ENCODE measurements at regions of chr16 and their contacts with region 1.

Region 1: GRCh38 chr16:85369741-85370528 is 243.2 kb upstream of the GSE1 start:
- DNase-seq: peak; percentile 84
- H3K4me3 ChIP-seq: no peak overlapping the region
- H3K27ac ChIP-seq: peak overlapping the region; percentile 50 to 95; a peak in 3 of 4 replicates
- H3K4me1 ChIP-seq: peaks cover 25 to 90% of the 10 kb centered on the region in 2 experiments
- H3K27me3 ChIP-seq: no peaks in the 10 kb centered on the region
- CTCF ChIP-seq: peak; percentile 87
- EP300 ChIP-seq: no peak
- RAD21 ChIP-seq: peak; percentile 71

Region 2: DNA sequence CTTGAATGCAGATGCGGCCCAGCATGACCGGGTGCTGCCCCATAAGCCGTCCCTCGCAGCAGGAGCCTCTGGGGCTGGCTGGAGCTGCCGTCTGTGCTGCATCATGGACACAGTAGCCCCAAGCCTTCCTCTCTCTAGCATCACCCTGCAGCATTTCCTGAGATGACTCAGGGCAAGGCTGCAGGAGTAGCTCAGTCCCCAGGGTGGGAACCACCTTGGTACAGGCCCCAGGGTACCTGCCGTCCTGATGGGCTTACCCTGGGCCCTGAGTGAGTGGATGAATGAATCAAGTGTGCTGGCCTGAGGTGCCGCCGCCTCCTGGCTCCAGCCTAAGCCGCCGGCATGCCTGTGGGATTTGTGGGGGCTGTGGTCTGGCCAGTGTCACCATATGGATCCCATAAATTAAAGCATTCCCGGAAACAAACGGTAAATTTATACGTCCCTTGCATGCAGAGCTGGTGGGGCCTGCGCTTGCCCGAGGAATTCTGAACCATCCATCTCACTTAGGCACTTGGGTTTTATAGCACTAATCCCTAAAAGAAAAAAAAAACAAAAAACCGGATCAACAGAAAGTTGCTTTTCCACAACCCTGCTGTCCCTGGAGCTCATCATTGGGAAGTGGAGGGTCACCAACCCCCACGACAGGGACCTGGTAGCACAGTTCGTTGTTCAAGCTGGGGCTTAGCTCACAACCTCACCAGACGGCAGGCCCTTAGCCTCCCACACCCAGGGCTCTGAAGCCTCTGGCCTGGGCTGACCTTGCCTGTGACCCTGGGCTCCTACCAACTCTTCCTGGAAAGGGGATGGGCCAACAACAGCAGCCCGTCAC is 15.0 kb before region 1 on chr16:
- CTCF ChIA-PET with region 1: interaction called, 37 read pairs
- POLR2A ChIA-PET with region 1: interaction called, 12 read pairs
- DNase-seq: peak; percentile 79
- H3K4me3 ChIP-seq: no peak overlapping the region
- H3K27ac ChIP-seq: peak overlapping the region; percentile 47 to 77
- H3K4me1 ChIP-seq: peaks cover 25 to 94% of the 10 kb centered on the region in 2 experiments; a peak in 3 of 4 replicates
- H3K27me3 ChIP-seq: no peaks in the 10 kb centered on the region
- CTCF ChIP-seq: no peak
- EP300 ChIP-seq: peak; percentile 75 to 88
- RAD21 ChIP-seq: peak; percentile 29

Region 3: DNA sequence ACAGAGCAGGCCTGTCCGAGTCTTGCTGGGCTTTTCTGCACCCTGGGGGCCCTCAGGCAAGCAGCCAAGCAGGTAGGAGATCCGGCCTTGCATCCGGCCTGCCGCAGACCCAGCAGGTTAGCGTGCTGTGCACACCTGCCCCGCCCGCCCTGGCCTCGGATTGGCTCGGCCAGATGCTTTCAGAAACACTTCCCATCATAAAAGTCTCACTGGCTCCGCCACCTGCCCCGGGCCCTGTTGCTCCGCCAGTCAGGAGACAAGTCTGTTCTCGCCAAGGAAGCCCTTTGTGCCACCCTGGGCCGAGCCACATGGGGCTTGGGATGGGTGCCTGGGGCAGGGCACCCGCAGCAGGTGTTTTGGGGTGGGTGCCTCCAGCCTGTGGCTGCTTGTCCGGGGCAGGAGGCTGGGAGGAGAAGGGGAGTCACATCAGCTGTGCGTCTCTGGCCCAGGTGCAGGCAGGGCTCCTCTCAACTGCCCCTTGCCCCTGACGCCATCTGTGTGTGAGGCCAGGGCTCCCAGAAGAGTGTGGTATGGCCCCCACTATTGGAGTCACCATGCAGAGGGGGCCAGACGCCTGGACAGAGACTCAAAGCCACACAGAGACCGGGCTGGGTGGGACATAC is 15.0 kb after region 1 on chr16:
- CTCF ChIA-PET with region 1: interaction called, 144 read pairs
- POLR2A ChIA-PET with region 1: interaction called, 7 read pairs
- DNase-seq: no peak
- H3K4me3 ChIP-seq: no peak overlapping the region
- H3K27ac ChIP-seq: peak overlapping the region in 1 of 2 experiments; percentile 99; a peak in 2 of 4 replicates
- H3K4me1 ChIP-seq: peaks cover 9 to 68% of the 10 kb centered on the region in 2 experiments; a peak in 3 of 4 replicates
- H3K27me3 ChIP-seq: no peaks in the 10 kb centered on the region
- CTCF ChIP-seq: no peak
- EP300 ChIP-seq: no peak
- RAD21 ChIP-seq: no peak

Region 4: DNA sequence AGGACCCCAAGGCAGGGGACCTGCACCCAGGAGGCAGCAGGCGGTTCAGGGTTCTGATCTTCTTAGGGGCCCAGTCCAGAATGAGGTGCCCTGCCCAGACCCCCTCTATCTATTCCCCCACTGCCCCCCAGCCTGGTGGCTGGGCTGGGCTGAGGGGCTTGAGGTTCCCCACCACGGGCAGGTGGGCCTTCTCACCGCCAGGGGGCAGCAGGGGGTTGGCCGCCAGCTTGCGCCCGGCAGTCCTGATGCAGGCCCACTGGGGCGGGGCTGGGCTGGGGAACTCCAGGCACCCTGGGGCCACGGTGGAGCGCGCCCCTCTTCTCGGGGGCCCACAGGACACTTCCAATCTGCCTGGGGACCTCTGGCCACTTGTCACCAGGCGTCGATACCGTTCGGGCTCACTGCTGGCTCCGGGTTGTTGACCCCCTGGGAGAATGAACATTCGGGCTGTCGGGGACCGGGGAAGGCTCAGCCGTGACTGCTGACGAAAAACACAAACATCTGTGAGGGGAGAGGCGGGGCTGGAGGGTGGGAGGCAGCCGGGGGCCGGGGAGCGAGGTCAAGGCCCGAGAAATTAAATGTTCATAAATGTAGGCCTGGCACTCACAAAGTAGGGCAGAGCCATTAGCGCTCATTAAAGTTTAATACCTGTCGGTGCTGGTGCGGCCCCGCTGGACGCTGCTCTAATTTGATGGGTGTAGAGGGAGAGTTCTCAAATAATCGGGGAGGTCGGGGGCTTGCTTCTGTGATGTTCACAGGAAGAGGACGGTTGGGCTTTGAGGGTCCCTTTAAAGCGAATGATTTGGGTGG is 23.9 kb after region 1 on chr16:
- CTCF ChIA-PET with region 1: interaction called, 144 read pairs
- POLR2A ChIA-PET with region 1: interaction called, 4 read pairs
- DNase-seq: peak; percentile 90
- H3K4me3 ChIP-seq: peak overlapping the region in 1 of 2 experiments; percentile 37; a peak in 1 of 4 replicates
- H3K27ac ChIP-seq: peak overlapping the region; percentile 75 to 99; a peak in 3 of 4 replicates
- H3K4me1 ChIP-seq: peaks cover 43 to 78% of the 10 kb centered on the region in 2 experiments
- H3K27me3 ChIP-seq: no peaks in the 10 kb centered on the region
- CTCF ChIP-seq: peak; percentile 88
- EP300 ChIP-seq: no peak
- RAD21 ChIP-seq: peak; percentile 71

Region 5: DNA sequence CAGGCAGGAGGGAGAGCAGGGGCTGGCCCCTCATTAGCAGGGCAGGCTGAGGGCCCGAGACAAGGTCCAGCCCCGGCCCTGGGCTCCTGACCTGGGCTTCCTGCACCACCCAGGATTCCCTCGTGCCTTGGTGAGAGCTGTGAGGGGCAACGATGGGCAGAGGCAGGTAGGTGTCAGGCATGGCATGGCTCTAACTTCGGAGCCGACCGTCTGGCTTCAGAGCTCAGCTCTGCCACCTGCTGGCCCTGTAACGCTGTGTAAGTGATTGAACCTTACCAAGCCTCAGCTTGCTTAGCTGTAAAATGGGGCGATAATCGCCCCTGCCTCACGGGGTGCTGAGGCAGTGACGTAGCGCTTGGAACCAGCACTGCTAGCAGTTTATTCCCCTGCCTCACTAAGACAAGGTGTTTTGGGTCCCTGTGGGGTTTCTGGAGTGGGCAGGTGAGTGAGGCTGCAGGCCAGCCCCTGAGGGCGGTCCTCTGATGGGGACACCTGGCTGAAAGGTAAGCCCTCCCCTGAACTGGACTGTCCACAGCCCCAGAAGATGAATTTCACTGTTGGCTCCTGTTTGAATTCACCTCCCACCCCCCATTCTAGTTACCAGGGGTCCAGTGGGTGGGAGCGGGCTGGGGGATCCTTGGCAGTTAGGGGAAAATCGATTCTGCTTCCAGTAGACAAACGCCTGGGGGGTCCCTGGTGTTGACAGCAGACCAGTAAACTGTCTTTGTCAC is 58.4 kb after region 1 on chr16:
- CTCF ChIA-PET with region 1: interaction called, 11 read pairs
- POLR2A ChIA-PET with region 1: no interaction called
- DNase-seq: peak; percentile 73
- H3K4me3 ChIP-seq: no peak overlapping the region; a peak in 1 of 4 replicates
- H3K27ac ChIP-seq: no peak overlapping the region
- H3K4me1 ChIP-seq: peaks cover 0 to 55% of the 10 kb centered on the region in 2 experiments; a peak in 1 of 4 replicates
- H3K27me3 ChIP-seq: no peaks in the 10 kb centered on the region
- CTCF ChIP-seq: peak; percentile 57
- EP300 ChIP-seq: no peak
- RAD21 ChIP-seq: peak; percentile 63